ENCODE measurements at regions of chr15 and their contacts with region 1.

Region 1: DNA sequence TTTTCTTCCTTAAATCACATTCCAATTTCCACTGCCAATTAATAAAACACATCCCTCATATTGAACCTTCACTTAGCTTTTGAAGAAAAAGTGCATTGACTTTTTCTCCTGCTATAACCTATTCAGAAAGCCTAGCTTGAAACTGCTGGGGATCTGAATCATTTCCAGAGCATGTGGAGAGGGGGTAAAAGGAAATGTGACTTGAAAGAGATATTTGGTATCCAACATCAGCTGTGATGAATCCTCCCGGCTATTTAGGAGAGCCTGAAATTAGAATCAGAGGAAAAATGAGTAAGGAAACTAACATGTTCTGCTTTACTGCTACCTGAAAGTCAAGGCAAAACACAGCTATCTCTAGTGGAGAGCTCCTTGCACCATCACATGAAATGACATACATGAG is 2.6 kb upstream of the GNB5 start:
- DNase-seq: no peak
- H3K4me3 ChIP-seq: no peak overlapping the region
- H3K27ac ChIP-seq: no peak overlapping the region
- H3K4me1 ChIP-seq: peaks cover 3% of the 10 kb centered on the region
- H3K27me3 ChIP-seq: no peaks in the 10 kb centered on the region
- CTCF ChIP-seq: no peak

Region 2: GRCh38 chr15:52246686-52247431 is 53.1 kb after region 1 on chr15:
- CTCF ChIA-PET with region 1: interaction called, 13 read pairs
- dilution Hi-C with region 1: no loop called
- in situ Hi-C with region 1: no loop called
- intact Hi-C with region 1: no loop called
- DNase-seq: peak; percentile 97
- H3K4me3 ChIP-seq: no peak overlapping the region
- H3K27ac ChIP-seq: peak overlapping the region; percentile 12
- H3K4me1 ChIP-seq: peaks cover 24% of the 10 kb centered on the region
- H3K27me3 ChIP-seq: no peaks in the 10 kb centered on the region
- CTCF ChIP-seq: no peak